Mammary epithelial cell (primary cell): ENCODE measurements at regions of chr13 and their contacts with region 1.

Region 1: DNA sequence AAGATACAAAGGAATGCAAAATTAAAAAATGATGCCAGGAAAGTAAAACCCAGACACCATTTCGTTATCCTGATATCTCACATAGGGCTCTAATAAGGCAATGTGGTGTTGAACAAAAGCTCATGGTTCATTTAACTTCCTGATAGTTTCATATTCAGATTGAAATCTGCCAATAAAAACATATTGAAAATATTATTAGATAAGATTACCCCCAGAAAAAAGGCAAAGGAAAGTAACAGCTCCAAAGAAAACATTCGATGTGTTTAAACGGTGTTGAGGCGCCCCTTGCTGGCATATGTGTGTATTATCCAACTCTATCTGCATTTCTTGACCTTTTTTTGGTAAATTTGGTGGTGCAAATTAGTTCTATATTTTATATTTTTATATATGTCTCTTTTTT is 75.9 kb downstream of the ESD start:
- DNase-seq: peak; percentile 11
- H3K4me3 ChIP-seq: no peak overlapping the region
- H3K27ac ChIP-seq: no peak overlapping the region
- H3K4me1 ChIP-seq: no peaks in the 10 kb centered on the region
- H3K27me3 ChIP-seq: no peaks in the 10 kb centered on the region
- CTCF ChIP-seq: peak; percentile 54 to 59

Region 2: DNA sequence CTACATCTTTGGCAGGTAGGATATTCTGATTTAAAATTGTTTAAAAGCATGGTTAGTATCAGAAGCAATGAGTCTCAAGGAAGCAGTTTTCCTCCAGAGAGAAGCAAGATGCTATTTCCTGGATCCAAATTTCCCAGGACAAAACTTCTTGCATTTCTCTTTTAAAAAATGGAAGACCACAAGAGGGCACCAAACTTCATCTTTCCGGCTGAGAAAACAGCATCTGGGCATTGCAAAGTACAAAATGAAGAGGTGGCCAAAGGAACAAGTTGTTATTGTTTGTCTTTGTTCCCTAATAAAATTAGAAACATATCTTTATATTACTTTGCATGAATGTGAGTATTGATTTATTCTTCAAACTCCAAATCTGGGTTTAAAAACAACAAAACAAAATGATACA is 228.1 kb before region 1 on chr13:
- CTCF ChIA-PET with region 1: no interaction called
- dilution Hi-C with region 1: no loop called
- in situ Hi-C with region 1: loop called (anchors 10 kb)
- intact Hi-C with region 1: loop called (anchors 1 kb)
- DNase-seq: peak; percentile 16
- H3K4me3 ChIP-seq: no peak overlapping the region
- H3K27ac ChIP-seq: no peak overlapping the region
- H3K4me1 ChIP-seq: peaks cover 3% of the 10 kb centered on the region
- H3K27me3 ChIP-seq: no peaks in the 10 kb centered on the region
- CTCF ChIP-seq: peak; percentile 41 to 63

Region 3: DNA sequence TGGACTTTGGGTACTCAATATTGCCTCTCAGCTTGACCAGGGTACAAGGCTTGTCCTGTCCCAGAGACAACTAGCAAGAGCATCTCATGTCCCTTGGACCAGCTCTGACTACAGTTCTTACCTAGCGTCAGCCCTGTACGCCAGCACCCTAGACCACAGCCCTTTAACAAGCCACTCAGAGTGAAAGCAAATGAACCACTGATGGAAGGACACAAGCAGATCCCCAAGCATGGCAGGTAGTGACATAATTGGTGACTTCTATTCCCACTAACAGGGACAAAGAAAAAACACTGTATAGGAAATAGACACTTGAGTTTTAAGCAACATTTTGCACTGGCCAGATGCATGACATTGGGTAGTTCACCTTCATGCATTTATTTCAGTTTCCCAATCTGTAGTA is 176.8 kb before region 1 on chr13:
- CTCF ChIA-PET with region 1: no interaction called
- dilution Hi-C with region 1: no loop called
- in situ Hi-C with region 1: loop called in 1 of 2 experiments (anchors 10 kb)
- intact Hi-C with region 1: no loop called
- DNase-seq: no peak
- H3K4me3 ChIP-seq: no peak overlapping the region
- H3K27ac ChIP-seq: no peak overlapping the region
- H3K4me1 ChIP-seq: no peaks in the 10 kb centered on the region
- H3K27me3 ChIP-seq: peaks cover 3% of the 10 kb centered on the region
- CTCF ChIP-seq: no peak

Region 4: DNA sequence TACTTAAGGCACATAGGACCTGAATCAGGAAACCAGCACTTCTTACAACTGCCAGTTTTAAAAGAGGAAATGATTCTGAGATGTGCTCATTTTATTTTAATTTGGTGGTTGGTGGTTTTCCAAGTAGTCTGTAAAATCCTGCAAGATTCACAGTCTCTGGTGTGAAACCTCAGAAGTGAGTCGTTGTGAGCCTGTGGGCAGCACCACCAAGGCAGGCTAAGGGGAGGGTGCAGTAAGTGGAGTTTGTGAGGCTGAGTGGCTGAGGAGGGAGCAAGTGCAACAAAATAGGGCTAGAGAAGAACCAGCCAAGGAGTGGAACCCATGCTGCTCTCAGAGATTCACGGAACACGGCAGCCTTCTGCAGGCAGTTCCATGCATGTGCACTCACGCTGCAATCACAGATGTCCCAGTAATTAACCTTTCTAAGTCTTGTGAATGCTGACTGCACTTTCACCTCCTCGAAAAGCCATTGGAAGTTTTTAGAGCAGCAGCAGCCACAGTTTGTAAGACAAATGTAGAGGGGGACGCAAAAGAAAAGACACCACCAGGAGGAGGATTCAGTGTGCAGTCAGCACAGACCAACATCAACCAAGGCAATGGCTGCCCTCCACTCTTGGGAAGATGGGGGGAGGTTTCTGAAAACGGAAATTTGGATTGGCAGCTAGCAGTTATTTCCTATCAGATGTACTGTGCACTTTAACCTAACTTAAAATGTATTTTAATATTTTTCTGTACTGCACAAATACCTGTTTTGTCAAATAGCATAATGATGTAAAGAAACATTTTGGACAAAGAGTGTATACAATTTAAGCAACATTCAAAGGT is 31.0 kb after region 1 on chr13:
- CTCF ChIA-PET with region 1: no interaction called
- dilution Hi-C with region 1: no loop called
- in situ Hi-C with region 1: no loop called
- intact Hi-C with region 1: no loop called
- DNase-seq: no peak
- H3K4me3 ChIP-seq: no peak overlapping the region
- H3K27ac ChIP-seq: no peak overlapping the region
- H3K4me1 ChIP-seq: no peaks in the 10 kb centered on the region
- H3K27me3 ChIP-seq: no peaks in the 10 kb centered on the region
- CTCF ChIP-seq: no peak

Region 5: GRCh38 chr13:47215741-47216140 is 494.7 kb after region 1 on chr13:
- CTCF ChIA-PET with region 1: no interaction called
- dilution Hi-C with region 1: no loop called
- in situ Hi-C with region 1: no loop called
- intact Hi-C with region 1: no loop called
- DNase-seq: peak; percentile 82
- H3K4me3 ChIP-seq: no peak overlapping the region
- H3K27ac ChIP-seq: peak overlapping the region; percentile 85
- H3K4me1 ChIP-seq: peaks cover 37% of the 10 kb centered on the region
- H3K27me3 ChIP-seq: no peaks in the 10 kb centered on the region
- CTCF ChIP-seq: no peak